Posterior vena cava (tissue), 2 donors: ENCODE measurements at regions of chrX and their contacts with region 1.

Region 1: DNA sequence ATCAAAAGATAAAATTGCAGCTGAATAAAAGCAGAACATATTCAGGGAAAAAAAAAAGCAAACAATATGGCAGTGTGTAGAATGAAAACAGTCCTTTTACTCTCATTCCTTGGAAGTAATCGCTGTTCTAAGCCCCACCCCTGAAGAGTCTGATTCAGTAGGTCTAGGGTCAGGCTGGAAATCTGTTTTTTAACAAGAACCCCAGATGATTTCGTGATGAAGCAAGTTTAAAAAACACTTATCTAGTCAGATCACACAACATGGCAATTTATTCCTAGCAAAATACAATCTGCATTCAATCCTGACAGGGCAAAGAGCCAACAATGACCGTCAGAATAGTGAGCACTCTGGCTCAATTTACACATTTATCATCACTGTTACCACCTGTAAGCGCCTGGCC is 16.1 kb downstream of the FAM120C start:
- DNase-seq: no peak

Region 2: GRCh38 chrX:53128097-53128749 is 1038.7 kb before region 1 on chrX:
- intact Hi-C with region 1: loop called in 1 of 2 experiments (anchors 5 kb)
- DNase-seq: no peak